ENCODE measurements at regions of chr17 and their contacts with region 1.

Region 1: DNA sequence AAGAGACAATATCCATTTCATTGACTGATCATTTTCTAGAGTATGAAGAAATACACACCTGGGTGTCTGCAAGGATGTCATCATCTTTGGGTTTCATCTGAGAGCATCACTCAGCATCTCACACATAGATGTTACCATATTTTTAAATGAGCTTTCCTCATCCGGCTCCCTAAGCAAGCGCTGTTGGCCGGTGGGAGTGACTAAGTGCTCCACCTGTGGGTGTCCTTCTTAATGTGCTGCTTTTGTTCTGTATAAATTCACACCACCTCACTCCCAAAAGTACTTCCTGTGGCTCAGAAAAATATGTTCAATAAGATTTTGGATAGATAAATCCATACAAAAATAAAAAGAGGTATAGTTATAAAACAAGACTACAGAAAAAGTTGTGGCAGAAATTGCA is 7.4 kb downstream of the SSTR2 start:
- DNase-seq: no peak
- ATAC-seq: no peak
- H3K4me3 ChIP-seq: no peak overlapping the region
- H3K27ac ChIP-seq: no peak overlapping the region
- H3K4me1 ChIP-seq: no peaks in the 10 kb centered on the region
- H3K27me3 ChIP-seq: no peaks in the 10 kb centered on the region

Region 2: GRCh38 chr17:72560303-72561247 is 611.7 kb before region 1 on chr17:
- intact Hi-C with region 1: loop called in 1 of 4 experiments (anchors 10 kb)
- DNase-seq: no peak
- ATAC-seq: peak; percentile 67 to 75
- H3K4me3 ChIP-seq: no peak overlapping the region
- H3K27ac ChIP-seq: no peak overlapping the region
- H3K4me1 ChIP-seq: no peaks in the 10 kb centered on the region
- H3K27me3 ChIP-seq: no peaks in the 10 kb centered on the region

Measured in right cardiac atrium (tissue), 5 donors.